Right lobe of liver (tissue), 6 donors: ENCODE measurements at regions of chr18 and their contacts with region 1.

Region 1: GRCh38 chr18:21155443-21155842 is 43.8 kb upstream of the ROCK1 start:
- DNase-seq: no peak
- ATAC-seq: no peak
- H3K4me3 ChIP-seq: no peak overlapping the region
- H3K27ac ChIP-seq: no peak overlapping the region
- H3K4me1 ChIP-seq: peaks cover 0 to 2% (median 0%) of the 10 kb centered on the region in 4 donors
- H3K27me3 ChIP-seq: no peaks in the 10 kb centered on the region
- CTCF ChIP-seq: no peak
- POLR2A ChIP-seq: no peak

Region 2: DNA sequence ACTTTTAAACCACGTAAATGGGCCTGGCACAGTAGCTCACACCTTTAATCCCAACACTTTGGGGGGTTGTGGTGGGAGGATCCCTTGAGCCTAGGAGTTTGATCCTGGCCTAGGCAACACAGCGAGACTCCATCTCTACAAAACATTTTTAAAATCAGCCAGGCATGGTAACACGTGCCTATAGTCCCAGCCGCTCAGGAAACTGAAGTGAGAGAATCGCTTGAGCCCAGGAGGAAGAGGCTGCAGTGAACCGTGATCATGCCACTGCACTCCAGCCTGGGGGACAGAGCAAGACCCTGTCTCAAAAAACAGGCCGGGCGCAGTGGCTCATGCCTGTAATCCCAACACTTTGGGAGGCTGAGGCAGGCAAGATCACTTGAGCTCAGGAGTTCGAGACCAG is 56.0 kb before region 1 on chr18:
- intact Hi-C with region 1: loop called in 1 of 2 experiments (anchors 10 kb)
- DNase-seq: no peak
- ATAC-seq: no peak
- H3K4me3 ChIP-seq: no peak overlapping the region
- H3K27ac ChIP-seq: no peak overlapping the region
- H3K4me1 ChIP-seq: peaks cover 0 to 10% (median 0%) of the 10 kb centered on the region in 4 donors
- H3K27me3 ChIP-seq: no peaks in the 10 kb centered on the region
- CTCF ChIP-seq: no peak
- POLR2A ChIP-seq: no peak

Region 3: DNA sequence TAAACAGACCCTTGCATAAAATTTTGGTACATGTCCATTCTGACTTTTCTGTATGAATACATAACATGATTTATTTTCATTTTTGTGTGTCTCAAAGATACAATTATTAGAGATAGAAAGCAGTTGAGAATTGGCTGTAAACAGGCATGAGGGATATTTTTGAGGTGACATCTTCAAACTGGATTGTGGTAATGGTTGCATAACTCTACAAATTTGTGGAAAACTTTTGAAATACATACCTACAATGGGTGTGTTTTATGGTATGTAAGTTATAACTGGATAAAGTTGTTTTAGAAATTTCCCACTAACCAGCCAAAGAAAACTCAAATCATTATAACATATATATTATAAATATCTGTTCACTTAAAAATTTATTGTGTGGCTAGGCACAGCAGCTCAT is 126.2 kb after region 1 on chr18:
- intact Hi-C with region 1: no loop called
- DNase-seq: no peak
- ATAC-seq: no peak
- H3K4me3 ChIP-seq: no peak overlapping the region
- H3K27ac ChIP-seq: no peak overlapping the region
- H3K4me1 ChIP-seq: no peaks in the 10 kb centered on the region
- H3K27me3 ChIP-seq: no peaks in the 10 kb centered on the region
- CTCF ChIP-seq: no peak
- POLR2A ChIP-seq: no peak